ENCODE measurements at regions of chr19 and their contacts with region 1.

Region 1: GRCh38 chr19:11380653-11381534 is 3.2 kb downstream of the EPOR start:
- DNase-seq: peak; percentile 95 to 96 (median 96)
- ATAC-seq: peak; percentile 88 to 93 (median 92)
- H3K4me3 ChIP-seq: peak overlapping the region; percentile 47 to 85 (median 66)
- H3K27ac ChIP-seq: peak overlapping the region; percentile 35 to 89 (median 84)
- H3K4me1 ChIP-seq: peaks cover under 1 to 74% (median 41%) of the 10 kb centered on the region in 12 donors
- H3K27me3 ChIP-seq: peaks cover 0 to 16% (median 3%) of the 10 kb centered on the region in 9 donors
- CTCF ChIP-seq: peak; percentile 50 to 90 (median 79)
- POLR2A ChIP-seq: peak in 1 of 2 donors; percentile 87

Region 2: DNA sequence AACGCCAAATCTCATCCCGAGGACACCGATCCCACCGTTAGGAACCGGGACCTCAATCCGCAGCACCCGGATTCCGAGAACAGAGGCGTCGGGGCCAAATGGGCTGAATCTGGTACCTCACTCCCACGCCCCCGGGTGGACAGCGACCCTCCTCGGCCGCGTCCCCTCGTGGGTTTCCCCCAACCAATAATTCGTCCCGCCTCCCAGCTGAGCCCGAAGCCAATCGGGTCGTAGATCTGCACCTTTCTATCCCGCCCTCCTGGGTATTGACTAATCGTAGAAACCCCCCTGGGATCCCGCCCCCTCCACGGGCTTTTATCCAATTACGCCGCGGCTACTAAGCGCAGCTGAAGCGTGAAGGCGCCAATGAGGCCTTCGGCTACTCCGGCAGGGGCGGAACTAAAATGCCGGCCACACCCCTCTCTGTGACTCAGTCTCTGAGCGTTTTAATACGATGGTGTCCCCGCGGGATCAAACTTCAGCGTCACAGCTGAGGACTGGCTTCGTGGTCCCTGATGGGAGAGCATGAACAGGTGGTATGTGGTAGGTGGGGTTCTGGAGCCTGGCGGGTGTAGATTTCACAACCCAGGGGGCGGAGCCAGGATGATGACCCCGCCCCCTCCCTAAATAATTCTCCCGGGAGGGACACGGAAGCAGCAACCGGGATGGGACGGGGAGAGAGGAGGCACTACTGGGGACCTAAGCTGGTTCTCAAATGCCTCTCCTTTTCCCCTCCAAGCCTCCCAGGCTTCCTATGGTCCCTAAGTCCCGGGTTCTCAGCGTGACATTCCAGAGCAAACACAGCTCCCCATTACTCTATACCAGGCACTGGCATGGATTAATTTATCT is 34.6 kb before region 1 on chr19 and contains the starts of genes CCDC159 and TMEM205:
- intact Hi-C with region 1: loop called in 1 of 10 experiments (anchors 5 kb)
- DNase-seq: peak; percentile 98 to 99 (median 99)
- ATAC-seq: peak; percentile 92 to 98 (median 97)
- H3K4me3 ChIP-seq: peak within 1 kb of the TSS; percentile 42 to 87 (median 78)
- H3K27ac ChIP-seq: peak within 1 kb of the TSS; percentile 48 to 92 (median 84)
- H3K4me1 ChIP-seq: peaks cover 0 to 32% (median 22%) of the 10 kb centered on the region in 12 donors
- H3K27me3 ChIP-seq: no peaks in the 10 kb centered on the region
- CTCF ChIP-seq: peak in 5 of 12 donors; percentile 12 to 37 (median 25)
- POLR2A ChIP-seq: peak; percentile 17 to 94
- total RNA-seq, gene CCDC159: 13.6 to 26.2 (median 21.9) TPM
- total RNA-seq, gene TMEM205: 68.3 to 372 (median 83.9) TPM

Region 3: GRCh38 chr19:11418549-11419506 is 37.9 kb after region 1 on chr19 and contains the start of gene RGL3:
- intact Hi-C with region 1: loop called in 1 of 10 experiments (anchors 5 kb)
- DNase-seq: peak in 4 of 5 donors; percentile 42 to 81 (median 60)
- ATAC-seq: peak in 3 of 4 donors; percentile 14 to 61 (median 59)
- H3K4me3 ChIP-seq: peak within 1 kb of the TSS; percentile 29 to 63 (median 54)
- H3K27ac ChIP-seq: peak within 1 kb of the TSS in 11 of 12 donors; percentile 37 to 84 (median 75)
- H3K4me1 ChIP-seq: peaks cover 4 to 48% (median 28%) of the 10 kb centered on the region in 12 donors
- H3K27me3 ChIP-seq: peaks cover 4 to 80% (median 55%) of the 10 kb centered on the region in 9 donors
- CTCF ChIP-seq: no peak
- POLR2A ChIP-seq: no peak
- total RNA-seq, gene RGL3: 2.1 to 5.0 (median 4.0) TPM

Region 4: GRCh38 chr19:11435058-11435832 is 54.4 kb after region 1 on chr19 and contains the starts of genes ODAD3 and PRKCSH:
- intact Hi-C with region 1: loop called in 6 of 10 experiments (anchors 1 to 10 kb)
- DNase-seq: peak; percentile 99
- ATAC-seq: peak; percentile 98 to 99 (median 98)
- H3K4me3 ChIP-seq: peak within 1 kb of the TSS; percentile 64 to 90 (median 80)
- H3K27ac ChIP-seq: peak within 1 kb of the TSS in 11 of 12 donors; percentile 73 to 86 (median 81)
- H3K4me1 ChIP-seq: peaks cover 0 to 22% (median 17%) of the 10 kb centered on the region in 12 donors
- H3K27me3 ChIP-seq: no peaks in the 10 kb centered on the region
- CTCF ChIP-seq: peak; percentile 69 to 90 (median 87)
- POLR2A ChIP-seq: peak in 1 of 2 donors; percentile 53
- total RNA-seq, gene ODAD3: 0.18 to 0.69 (median 0.31) TPM in 7 of 9 donors, not detected in the others
- total RNA-seq, gene PRKCSH: 69.3 to 210 (median 120) TPM

Region 5: GRCh38 chr19:11446652-11447301 is 65.9 kb after region 1 on chr19:
- intact Hi-C with region 1: loop called in 3 of 10 experiments (anchors 5 to 10 kb)
- DNase-seq: peak; percentile 41 to 84 (median 50)
- ATAC-seq: peak; percentile 33 to 78 (median 70)
- H3K4me3 ChIP-seq: no peak overlapping the region
- H3K27ac ChIP-seq: no peak overlapping the region
- H3K4me1 ChIP-seq: peaks cover 0 to 8% (median 0%) of the 10 kb centered on the region in 12 donors
- H3K27me3 ChIP-seq: peaks cover 0 to 3% (median 0%) of the 10 kb centered on the region in 9 donors
- CTCF ChIP-seq: peak; percentile 56 to 82 (median 70)
- POLR2A ChIP-seq: no peak

Region 6: GRCh38 chr19:11482384-11483050 is 101.6 kb after region 1 on chr19:
- intact Hi-C with region 1: loop called in 3 of 10 experiments (anchors 2 to 10 kb)
- DNase-seq: peak; percentile 80 to 93 (median 85)
- ATAC-seq: peak; percentile 78 to 92 (median 87)
- H3K4me3 ChIP-seq: peak overlapping the region in 11 of 12 donors; percentile 16 to 49 (median 41)
- H3K27ac ChIP-seq: no peak overlapping the region
- H3K4me1 ChIP-seq: peaks cover 0 to 43% (median 22%) of the 10 kb centered on the region in 12 donors
- H3K27me3 ChIP-seq: peaks cover 19 to 59% (median 39%) of the 10 kb centered on the region in 9 donors
- CTCF ChIP-seq: peak; percentile 85 to 96 (median 94)
- POLR2A ChIP-seq: no peak

Region 7: GRCh38 chr19:11496391-11497163 is 115.7 kb after region 1 on chr19:
- intact Hi-C with region 1: no loop called
- DNase-seq: peak in 3 of 5 donors; percentile 57 to 86 (median 59)
- ATAC-seq: peak in 3 of 4 donors; percentile 59 to 64 (median 61)
- H3K4me3 ChIP-seq: no peak overlapping the region
- H3K27ac ChIP-seq: no peak overlapping the region
- H3K4me1 ChIP-seq: no peaks in the 10 kb centered on the region
- H3K27me3 ChIP-seq: no peaks in the 10 kb centered on the region
- CTCF ChIP-seq: peak; percentile 37 to 65 (median 58)
- POLR2A ChIP-seq: no peak

Region 8: DNA sequence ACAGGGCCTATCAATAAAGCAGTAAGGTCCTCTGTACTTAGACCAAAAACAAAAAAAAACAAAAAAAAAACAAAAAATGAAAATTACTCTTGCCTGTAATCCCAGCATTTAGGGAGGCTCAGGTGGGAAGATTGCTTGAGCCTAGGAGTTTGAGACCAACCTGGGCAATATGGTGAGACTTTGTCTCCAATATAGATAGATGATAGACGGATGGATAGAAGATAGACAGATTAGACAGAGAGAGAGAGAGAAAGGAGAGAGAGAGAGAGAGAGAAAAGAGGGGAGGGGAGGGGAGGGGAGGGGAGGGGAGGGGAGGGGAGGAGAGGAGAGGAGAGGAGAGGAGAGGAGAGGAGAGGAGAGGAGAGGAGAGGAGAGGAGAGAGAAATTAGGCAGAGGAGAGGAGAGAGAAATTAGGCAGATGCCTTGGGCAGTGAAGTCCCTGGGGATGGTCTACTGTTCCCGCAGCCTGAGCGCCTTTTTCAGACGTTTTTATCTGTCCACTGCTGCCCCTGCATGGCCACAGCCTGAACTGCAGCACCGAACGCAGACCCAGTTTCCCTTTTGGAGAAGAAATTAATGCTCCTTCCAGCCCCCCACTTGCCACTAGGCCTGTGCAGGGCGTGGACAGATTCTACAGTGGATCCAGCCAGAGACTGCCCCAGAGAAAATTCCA is 206.5 kb after region 1 on chr19:
- intact Hi-C with region 1: loop called in 2 of 10 experiments (anchors 5 to 10 kb)
- DNase-seq: peak; percentile 65 to 83 (median 73)
- ATAC-seq: peak; percentile 49 to 88 (median 88)
- H3K4me3 ChIP-seq: no peak overlapping the region
- H3K27ac ChIP-seq: no peak overlapping the region
- H3K4me1 ChIP-seq: peaks cover 0 to 23% (median 0%) of the 10 kb centered on the region in 12 donors
- H3K27me3 ChIP-seq: no peaks in the 10 kb centered on the region
- CTCF ChIP-seq: peak; percentile 73 to 94 (median 82)
- POLR2A ChIP-seq: no peak